ENCODE measurements at regions of chr1 and their contacts with region 1.

Region 1: DNA sequence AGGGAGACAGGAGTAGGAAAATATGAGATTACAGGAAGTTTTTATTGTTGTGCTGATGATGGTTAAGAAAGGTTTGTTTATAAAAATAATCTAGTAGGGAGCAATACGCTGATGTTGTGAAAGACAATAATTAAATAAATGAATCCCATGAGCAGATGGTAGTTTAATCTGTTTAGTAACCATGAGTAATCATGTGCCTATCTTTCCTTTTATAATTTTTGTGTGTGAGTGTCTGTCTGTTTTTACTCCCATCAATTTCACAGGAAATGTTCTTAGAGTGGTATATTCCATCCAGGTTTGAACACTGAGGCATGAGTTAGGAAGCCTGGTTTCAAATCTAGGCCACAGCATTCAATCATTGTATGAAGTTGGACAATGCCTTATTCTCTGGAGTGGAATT is 180.5 kb downstream of the OLFM3 start:
- DNase-seq: no peak
- H3K4me3 ChIP-seq: no peak overlapping the region
- H3K27ac ChIP-seq: no peak overlapping the region
- H3K4me1 ChIP-seq: no peaks in the 10 kb centered on the region
- H3K27me3 ChIP-seq: no peaks in the 10 kb centered on the region
- CTCF ChIP-seq: no peak

Region 2: DNA sequence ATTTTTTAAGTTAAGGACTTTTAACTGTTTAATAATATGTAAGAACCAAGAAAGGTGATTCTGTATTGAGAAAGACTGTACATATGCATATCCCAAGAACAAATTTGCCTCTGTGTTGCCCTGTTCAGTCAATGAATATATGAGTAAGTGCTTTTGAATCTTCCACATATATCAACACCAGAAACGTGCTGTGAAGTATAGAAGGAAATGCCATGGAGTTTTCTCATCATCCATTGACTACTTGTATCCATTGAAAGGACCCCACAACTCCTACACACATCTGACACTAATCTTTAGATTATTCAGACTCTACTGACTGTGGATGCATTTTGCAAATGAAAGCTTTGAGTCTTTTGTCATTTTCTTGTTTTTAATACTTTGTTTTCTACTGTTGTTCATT is 212.5 kb before region 1 on chr1:
- intact Hi-C with region 1: no loop called
- DNase-seq: no peak
- H3K4me3 ChIP-seq: no peak overlapping the region
- H3K27ac ChIP-seq: no peak overlapping the region
- H3K4me1 ChIP-seq: no peaks in the 10 kb centered on the region
- H3K27me3 ChIP-seq: no peaks in the 10 kb centered on the region
- CTCF ChIP-seq: no peak

Region 3: DNA sequence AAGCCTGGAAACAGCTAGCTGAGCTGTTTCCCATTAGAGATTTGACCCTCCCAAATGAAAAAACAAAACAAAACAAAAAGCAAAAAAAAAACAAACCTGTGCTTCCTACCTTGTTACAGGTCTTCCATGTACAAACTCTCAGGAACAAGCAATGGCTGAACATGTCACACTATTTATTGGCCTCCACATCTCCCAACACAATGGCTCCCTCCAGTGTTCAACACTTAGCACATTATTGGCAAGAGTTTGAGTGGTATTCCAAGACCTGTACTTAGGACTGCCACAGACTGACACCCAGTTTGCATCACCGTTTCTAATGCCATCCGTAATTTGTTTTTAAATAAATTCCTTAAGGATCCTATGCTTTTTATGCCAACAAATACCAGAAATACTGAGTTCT is 375.5 kb after region 1 on chr1:
- intact Hi-C with region 1: loop called (anchors 5 kb)
- DNase-seq: no peak
- H3K4me3 ChIP-seq: no peak overlapping the region
- H3K27ac ChIP-seq: no peak overlapping the region
- H3K4me1 ChIP-seq: no peaks in the 10 kb centered on the region
- H3K27me3 ChIP-seq: no peaks in the 10 kb centered on the region
- CTCF ChIP-seq: peak; percentile 60